Left ventricle myocardium inferior (tissue), 1 donor: ENCODE measurements at regions of chr13 and their contacts with region 1.

Region 1: GRCh38 chr13:30114571-30115256 is 192.6 kb downstream of the KATNAL1 start:
- DNase-seq: peak; percentile 89
- H3K4me3 ChIP-seq: peak overlapping the region; percentile 71
- H3K27ac ChIP-seq: peak overlapping the region; percentile 53
- H3K4me1 ChIP-seq: peaks cover 29% of the 10 kb centered on the region
- H3K27me3 ChIP-seq: peaks cover 18% of the 10 kb centered on the region
- CTCF ChIP-seq: peak; percentile 92

Region 2: DNA sequence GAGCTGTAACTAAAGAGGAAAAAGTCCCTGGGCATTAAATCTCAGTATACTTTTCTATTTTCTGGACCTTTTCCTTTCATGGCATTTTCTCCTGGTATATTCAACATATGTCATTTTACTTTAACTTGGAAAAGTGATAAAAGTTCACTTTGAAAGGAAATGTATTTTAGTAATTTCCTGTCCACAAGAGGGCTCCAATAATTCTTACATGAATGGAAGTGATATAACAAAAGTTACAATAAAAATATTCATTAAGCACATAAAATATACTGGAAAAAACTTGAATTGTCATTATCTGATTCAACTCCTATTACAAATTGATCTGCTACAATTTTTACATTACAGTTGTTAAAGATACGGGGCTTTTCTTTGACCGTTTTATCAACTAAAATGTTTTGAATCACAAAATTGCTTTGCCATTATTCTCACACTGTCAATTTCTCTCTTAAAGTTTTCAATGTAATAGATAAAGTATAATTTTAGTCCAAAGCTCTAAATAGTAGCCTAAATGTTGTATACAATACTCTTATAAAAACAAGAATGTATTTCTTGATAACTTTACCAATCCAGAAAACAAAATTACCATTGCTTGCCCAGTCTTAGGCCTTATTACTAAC is 269.2 kb before region 1 on chr13:
- intact Hi-C with region 1: loop called (anchors 2 kb)
- DNase-seq: no peak
- H3K4me3 ChIP-seq: no peak overlapping the region
- H3K27ac ChIP-seq: no peak overlapping the region
- H3K4me1 ChIP-seq: peaks cover 64% of the 10 kb centered on the region
- H3K27me3 ChIP-seq: no peaks in the 10 kb centered on the region
- CTCF ChIP-seq: peak; percentile 51

Region 3: DNA sequence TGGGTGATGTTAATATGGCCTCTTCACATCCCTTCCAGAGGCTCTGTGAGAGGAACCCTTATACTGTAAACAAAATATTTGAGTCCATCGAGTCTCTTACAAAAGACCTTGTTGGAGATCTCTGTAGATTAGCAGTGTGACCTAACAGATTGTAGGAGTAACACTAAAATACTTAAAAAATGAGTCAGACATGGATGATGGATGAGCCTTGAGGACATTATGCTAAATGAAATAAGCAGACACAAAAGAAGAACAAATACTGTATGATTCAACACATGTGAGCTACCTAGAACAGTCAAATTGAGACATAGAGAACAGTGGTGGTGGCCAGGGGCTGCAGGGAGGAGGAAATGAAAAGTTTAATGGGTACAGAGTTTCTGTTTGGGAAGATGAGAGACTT is 112.1 kb before region 1 on chr13:
- intact Hi-C with region 1: no loop called
- DNase-seq: no peak
- H3K4me3 ChIP-seq: no peak overlapping the region
- H3K27ac ChIP-seq: no peak overlapping the region
- H3K4me1 ChIP-seq: no peaks in the 10 kb centered on the region
- H3K27me3 ChIP-seq: peaks cover 24% of the 10 kb centered on the region
- CTCF ChIP-seq: no peak

Region 4: DNA sequence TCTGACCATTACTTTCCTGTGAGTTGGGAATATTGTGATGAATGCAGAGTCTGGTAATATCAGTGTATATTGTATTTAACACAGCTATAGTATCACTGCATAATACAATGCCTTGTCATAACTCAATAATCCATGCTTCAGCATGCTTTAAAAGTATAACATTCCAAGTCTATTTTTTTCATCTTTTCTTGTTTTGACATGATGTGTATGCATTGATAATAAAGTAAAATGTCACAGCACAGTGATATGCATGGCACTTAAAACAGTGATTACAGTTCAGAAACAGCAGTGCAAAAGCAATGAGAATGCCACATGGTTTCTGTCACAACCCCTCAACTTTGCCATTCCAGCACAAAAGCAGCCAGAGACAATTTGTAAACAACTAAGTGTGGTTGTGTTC is 174.8 kb after region 1 on chr13:
- intact Hi-C with region 1: no loop called
- DNase-seq: no peak
- H3K4me3 ChIP-seq: no peak overlapping the region
- H3K27ac ChIP-seq: no peak overlapping the region
- H3K4me1 ChIP-seq: peaks cover 28% of the 10 kb centered on the region
- H3K27me3 ChIP-seq: no peaks in the 10 kb centered on the region
- CTCF ChIP-seq: no peak